GM12878 (cell line): ENCODE measurements at regions of chr6 and their contacts with region 1.

Region 1: GRCh38 chr6:158284007-158284875 is 28.0 kb upstream of the TULP4 start:
- DNase-seq: no peak
- ATAC-seq: peak; percentile 52
- H3K4me3 ChIP-seq: no peak overlapping the region
- H3K27ac ChIP-seq: no peak overlapping the region
- H3K4me1 ChIP-seq: peaks cover 4% of the 10 kb centered on the region; the same call in 1 of the 2 replicates
- H3K27me3 ChIP-seq: no peaks in the 10 kb centered on the region
- CTCF ChIP-seq: no peak
- EP300 ChIP-seq: no peak
- POLR2A ChIP-seq: no peak
- RAD21 ChIP-seq: no peak

Region 2: GRCh38 chr6:158270389-158271127 is 13.7 kb before region 1 on chr6:
- CTCF ChIA-PET with region 1: interaction called, 4 read pairs
- POLR2A ChIA-PET with region 1: interaction called, 4 read pairs
- RAD21 ChIA-PET with region 1: interaction called, 14 read pairs
- SMC1A ChIA-PET with region 1: interaction called, 13 read pairs
- in situ Hi-C with region 1: no loop called
- intact Hi-C with region 1: no loop called
- DNase-seq: no peak
- ATAC-seq: peak; percentile 32
- H3K4me3 ChIP-seq: no peak overlapping the region
- H3K27ac ChIP-seq: peak overlapping the region; percentile 54
- H3K4me1 ChIP-seq: peaks cover 20% of the 10 kb centered on the region
- H3K27me3 ChIP-seq: no peaks in the 10 kb centered on the region
- CTCF ChIP-seq: no peak
- EP300 ChIP-seq: no peak
- POLR2A ChIP-seq: no peak
- RAD21 ChIP-seq: no peak